Activated CD4-positive, alpha-beta T cell treated with anti-CD3 and anti-CD28 coated beads for 36 hours (primary cell): ENCODE measurements at regions of chr1 and their contacts with region 1.

Region 1: DNA sequence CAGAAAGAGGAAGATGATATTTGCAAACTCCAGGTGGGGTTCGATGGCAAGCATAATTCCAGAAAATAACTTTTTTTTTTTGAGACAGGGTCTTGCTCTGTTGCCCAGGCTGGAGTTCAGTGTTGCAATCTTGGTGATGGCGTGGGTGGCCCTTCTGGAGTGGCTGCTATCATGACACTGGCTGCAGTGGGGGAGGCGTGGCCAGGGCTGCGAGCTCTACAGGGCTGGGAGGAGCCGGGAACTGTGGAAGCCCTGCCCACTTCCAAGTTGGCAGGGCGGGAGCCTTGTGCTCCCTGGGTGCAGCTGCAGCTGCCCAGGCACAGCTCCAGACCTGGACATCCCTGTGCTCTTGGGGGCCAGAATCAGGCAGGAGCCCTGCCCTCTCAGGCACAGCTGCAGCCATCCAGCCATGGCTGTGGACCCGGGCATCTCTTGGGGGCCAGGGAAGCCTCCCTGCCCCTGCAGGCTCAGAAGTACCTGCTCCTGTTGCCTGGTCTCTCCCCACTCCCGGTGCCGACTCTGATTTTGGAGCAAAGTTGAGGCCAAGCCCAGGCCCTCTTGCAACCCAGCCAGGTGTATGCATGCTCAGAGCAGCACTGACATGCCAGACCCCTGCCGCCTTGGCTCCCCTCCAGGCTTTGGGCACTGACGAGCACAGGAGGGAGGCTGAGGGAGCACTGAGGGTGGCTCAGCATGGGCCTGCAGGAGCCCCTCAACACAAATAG is 7.2 kb upstream of the BCL10 start:
- DNase-seq: no peak
- ATAC-seq: no peak
- H3K4me3 Mint-ChIP-seq: no peak overlapping the region
- H3K27ac Mint-ChIP-seq: no peak overlapping the region
- H3K4me1 Mint-ChIP-seq: peaks cover 12% of the 10 kb centered on the region
- H3K27me3 Mint-ChIP-seq: peaks cover 6% of the 10 kb centered on the region

Region 2: DNA sequence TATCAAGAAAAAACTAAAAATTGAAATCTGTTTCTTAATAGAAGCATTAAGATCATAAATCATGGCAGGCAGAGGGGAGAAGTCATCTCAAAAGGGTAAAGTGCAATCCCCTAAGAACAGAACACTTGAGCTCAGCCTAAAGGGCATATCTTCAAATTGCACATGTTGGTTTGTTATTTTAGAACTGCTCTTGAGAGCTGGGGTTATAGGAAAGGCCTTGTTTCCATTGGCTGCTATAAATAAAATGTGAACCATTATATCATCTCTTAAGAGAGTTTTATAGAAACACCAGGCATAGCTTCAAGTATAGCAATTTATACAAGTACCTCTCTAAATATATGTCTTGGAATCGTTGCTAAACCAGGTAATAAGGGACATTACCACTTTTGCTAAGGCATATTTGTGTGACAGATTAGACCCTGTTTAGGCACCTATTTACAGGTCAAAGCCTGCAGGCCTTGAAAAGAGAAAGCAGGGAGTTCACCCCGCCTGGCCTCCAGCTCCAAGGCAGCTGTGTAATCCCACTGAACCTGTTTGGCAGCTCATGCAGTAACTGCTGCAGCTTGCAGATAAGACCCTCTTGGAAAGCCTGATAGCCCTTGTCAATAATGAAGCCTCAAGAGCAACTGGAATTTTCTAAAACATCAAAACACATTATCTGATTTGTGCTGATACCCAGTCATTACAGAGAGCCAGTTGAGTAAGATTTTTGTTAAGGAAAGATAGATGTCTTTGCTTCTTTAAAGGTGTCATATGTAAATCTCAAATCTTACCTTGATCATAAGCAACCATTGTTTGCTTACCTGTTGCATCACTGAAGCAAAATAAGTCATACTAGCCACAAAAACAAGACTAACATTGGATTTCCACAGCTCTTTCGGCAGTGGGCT is 58.7 kb before region 1 on chr1:
- CTCF ChIA-PET with region 1: no interaction called
- POLR2A ChIA-PET with region 1: no interaction called
- intact Hi-C with region 1: no loop called
- DNase-seq: no peak
- ATAC-seq: no peak
- H3K4me3 Mint-ChIP-seq: no peak overlapping the region
- H3K27ac Mint-ChIP-seq: no peak overlapping the region
- H3K4me1 Mint-ChIP-seq: no peaks in the 10 kb centered on the region
- H3K27me3 Mint-ChIP-seq: peaks cover 2% of the 10 kb centered on the region

Region 3: DNA sequence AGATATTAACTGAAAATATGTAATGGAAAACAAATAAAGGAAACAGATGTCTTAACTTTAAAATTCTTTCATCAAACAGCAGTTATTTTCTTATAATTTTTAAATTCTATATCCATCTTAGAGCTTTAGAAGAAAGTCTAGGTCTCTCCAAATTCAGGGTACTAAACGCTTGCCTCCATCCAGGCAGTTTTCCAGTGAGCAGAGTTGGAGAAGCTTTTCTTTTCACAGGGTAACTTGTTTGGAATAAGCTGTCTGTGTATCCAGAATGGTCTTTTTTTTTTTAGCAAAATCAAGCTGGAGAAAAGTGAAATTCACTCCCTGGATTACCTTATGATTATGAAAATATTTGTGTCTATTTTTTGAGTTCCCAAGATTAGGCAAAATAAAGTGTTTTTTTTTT is 92.7 kb after region 1 on chr1:
- CTCF ChIA-PET with region 1: no interaction called
- POLR2A ChIA-PET with region 1: interaction called, 14 read pairs
- intact Hi-C with region 1: no loop called
- DNase-seq: no peak
- ATAC-seq: no peak
- H3K4me3 Mint-ChIP-seq: no peak overlapping the region
- H3K27ac Mint-ChIP-seq: no peak overlapping the region
- H3K4me1 Mint-ChIP-seq: no peaks in the 10 kb centered on the region
- H3K27me3 Mint-ChIP-seq: peaks cover 8% of the 10 kb centered on the region

Region 4: GRCh38 chr1:86035101-86035500 is 751.5 kb after region 1 on chr1:
- CTCF ChIA-PET with region 1: no interaction called
- POLR2A ChIA-PET with region 1: no interaction called
- intact Hi-C with region 1: no loop called
- DNase-seq: no peak
- ATAC-seq: no peak
- H3K4me3 Mint-ChIP-seq: no peak overlapping the region
- H3K27ac Mint-ChIP-seq: no peak overlapping the region
- H3K4me1 Mint-ChIP-seq: no peaks in the 10 kb centered on the region
- H3K27me3 Mint-ChIP-seq: no peaks in the 10 kb centered on the region